Heart left ventricle (tissue), 16 donors: ENCODE measurements at regions of chr1 and their contacts with region 1.

Region 1: GRCh38 chr1:157199421-157199755 is 61.2 kb upstream of the ETV3 start:
- DNase-seq: no peak
- ATAC-seq: no peak
- H3K4me3 ChIP-seq: no peak overlapping the region
- H3K27ac ChIP-seq: no peak overlapping the region
- H3K4me1 ChIP-seq: peaks cover 0 to 9% (median 0%) of the 10 kb centered on the region in 12 donors
- H3K27me3 ChIP-seq: peaks cover 14 to 41% (median 16%) of the 10 kb centered on the region in 9 donors
- CTCF ChIP-seq: no peak
- POLR2A ChIP-seq: no peak

Region 2: GRCh38 chr1:156980551-156980950 is 218.8 kb before region 1 on chr1:
- intact Hi-C with region 1: no loop called
- DNase-seq: no peak
- ATAC-seq: peak in 3 of 4 donors; percentile 33 to 60 (median 51)
- H3K4me3 ChIP-seq: no peak overlapping the region
- H3K27ac ChIP-seq: no peak overlapping the region
- H3K4me1 ChIP-seq: peaks cover 0 to 2% (median 0%) of the 10 kb centered on the region in 12 donors
- H3K27me3 ChIP-seq: no peaks in the 10 kb centered on the region
- CTCF ChIP-seq: no peak
- POLR2A ChIP-seq: no peak

Region 3: GRCh38 chr1:157081707-157082106 is 117.7 kb before region 1 on chr1:
- intact Hi-C with region 1: no loop called
- DNase-seq: no peak
- ATAC-seq: no peak
- H3K4me3 ChIP-seq: no peak overlapping the region
- H3K27ac ChIP-seq: no peak overlapping the region
- H3K4me1 ChIP-seq: no peaks in the 10 kb centered on the region
- H3K27me3 ChIP-seq: peaks cover 0 to 2% (median 0%) of the 10 kb centered on the region in 9 donors
- CTCF ChIP-seq: no peak
- POLR2A ChIP-seq: no peak

Region 4: GRCh38 chr1:157482174-157482573 is 282.8 kb after region 1 on chr1:
- intact Hi-C with region 1: loop called in 2 of 10 experiments (anchors 5 to 10 kb)
- DNase-seq: no peak
- ATAC-seq: no peak
- H3K4me3 ChIP-seq: no peak overlapping the region
- H3K27ac ChIP-seq: no peak overlapping the region
- H3K4me1 ChIP-seq: no peaks in the 10 kb centered on the region
- H3K27me3 ChIP-seq: peaks cover 0 to 9% (median 0%) of the 10 kb centered on the region in 9 donors
- CTCF ChIP-seq: no peak
- POLR2A ChIP-seq: no peak